Sigmoid colon (tissue), 7 donors: ENCODE measurements at regions of chr2 and their contacts with region 1.

Region 1: DNA sequence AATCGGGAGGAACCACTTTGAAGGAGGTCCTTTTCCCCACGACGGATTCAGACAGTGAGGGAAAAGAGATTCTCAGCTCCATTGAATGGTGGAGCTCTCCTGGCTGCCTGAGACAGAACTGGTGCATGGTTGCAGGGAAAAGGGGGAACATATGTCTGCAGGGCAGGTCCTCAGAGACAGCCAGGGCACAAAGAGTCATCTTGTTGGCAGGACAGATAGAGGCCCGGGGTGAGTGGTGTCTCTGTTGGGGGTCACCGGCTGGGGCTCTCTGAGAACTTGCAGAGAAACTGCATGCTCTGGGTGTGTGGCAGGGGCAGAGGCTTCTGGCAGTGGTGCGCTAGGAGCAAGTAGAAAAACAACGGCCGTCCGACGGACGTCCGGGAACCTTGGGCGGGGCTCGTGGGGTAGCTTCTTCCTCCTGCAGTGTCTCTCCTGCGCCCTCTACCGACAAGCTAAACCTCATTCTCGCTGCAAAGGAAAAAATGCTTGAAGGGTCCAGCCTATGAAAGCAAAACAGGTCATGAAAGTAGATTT is 94.3 kb downstream of the CDCA7 start:
- DNase-seq: peak; percentile 89
- H3K4me3 ChIP-seq: peak overlapping the region; percentile 1 to 41 (median 26)
- H3K27ac ChIP-seq: peak overlapping the region in 2 of 4 donors; percentile 43 to 63
- H3K4me1 ChIP-seq: peaks cover 0 to 4% (median 0%) of the 10 kb centered on the region in 4 donors
- H3K27me3 ChIP-seq: no peaks in the 10 kb centered on the region
- CTCF ChIP-seq: peak in 3 of 4 experiments; percentile 34 to 75 (median 52)
- EP300 ChIP-seq: no peak
- POLR2A ChIP-seq: no peak

Region 2: DNA sequence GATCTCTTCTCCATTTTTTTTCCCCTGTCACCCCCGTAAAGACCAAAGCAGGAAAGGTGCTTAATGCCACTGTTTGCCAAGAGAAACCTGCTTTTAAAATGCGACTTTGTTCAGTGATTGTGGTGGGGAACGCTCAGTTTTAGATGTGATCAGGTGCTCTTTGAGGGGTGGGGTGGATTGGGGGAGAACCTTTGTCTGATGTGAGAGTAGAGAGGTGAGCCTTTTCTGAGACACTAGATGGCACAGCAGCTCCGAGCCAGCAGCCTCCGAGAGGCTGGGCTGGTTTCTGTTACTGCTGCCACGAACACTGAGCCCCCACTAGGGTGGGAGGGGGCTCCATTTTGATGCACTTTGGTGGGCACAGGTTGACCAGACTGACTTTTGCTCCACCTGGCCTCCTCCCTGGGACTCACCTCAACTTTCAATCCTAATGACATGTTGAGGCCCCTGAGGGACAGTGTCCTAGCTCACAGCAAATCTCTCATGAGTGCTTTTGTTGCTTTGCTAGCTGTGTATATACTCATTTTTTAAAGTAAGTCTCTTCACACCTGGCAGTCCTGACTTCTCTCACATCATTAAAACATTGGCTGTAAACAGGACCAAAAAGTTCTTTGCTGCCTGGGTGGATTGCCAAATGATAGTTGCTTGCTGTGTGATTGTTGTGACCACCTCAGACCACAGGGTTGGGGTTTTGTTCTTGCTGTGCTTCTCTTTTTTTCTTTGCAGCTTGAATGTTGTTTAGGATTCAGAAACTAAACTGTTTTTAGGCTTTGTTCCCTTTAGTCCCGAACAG is 471.5 kb before region 1 on chr2:
- intact Hi-C with region 1: loop called (anchors 5 kb)
- DNase-seq: no peak
- H3K4me3 ChIP-seq: no peak overlapping the region
- H3K27ac ChIP-seq: no peak overlapping the region
- H3K4me1 ChIP-seq: peaks cover 0 to 5% (median 0%) of the 10 kb centered on the region in 4 donors
- H3K27me3 ChIP-seq: no peaks in the 10 kb centered on the region
- CTCF ChIP-seq: peak in 1 of 4 experiments; percentile 30
- EP300 ChIP-seq: no peak
- POLR2A ChIP-seq: no peak

Region 3: DNA sequence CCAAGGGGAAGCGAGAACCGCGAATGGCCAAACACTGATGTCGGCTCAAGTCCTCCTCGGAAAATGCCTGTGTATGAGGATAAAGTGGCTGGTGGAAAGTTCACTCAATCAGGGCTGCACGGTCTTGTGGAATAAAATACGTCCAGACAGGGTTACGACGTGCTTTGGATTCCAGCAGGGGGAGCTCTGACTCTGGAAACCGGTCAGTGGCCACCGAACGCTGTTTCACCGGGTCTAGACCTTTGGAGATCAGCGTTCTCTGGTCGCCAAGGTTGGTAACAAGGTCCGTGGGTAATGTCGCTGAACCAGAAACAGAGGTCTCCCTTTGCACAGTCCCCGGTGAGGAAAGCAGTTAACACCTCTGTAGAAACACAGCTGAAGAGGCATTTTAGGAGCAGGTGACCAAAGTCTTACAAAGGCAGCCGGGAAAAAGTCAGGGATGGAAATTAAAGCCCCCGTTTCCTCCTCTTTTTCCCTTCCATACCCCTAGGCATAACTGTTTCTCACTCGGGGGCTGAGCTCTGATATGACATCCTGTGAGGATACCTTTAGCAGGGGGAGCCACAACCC is 46.5 kb before region 1 on chr2:
- intact Hi-C with region 1: loop called (anchors 1 kb)
- DNase-seq: peak; percentile 89
- H3K4me3 ChIP-seq: peak overlapping the region in 2 of 4 donors; percentile 20 to 29
- H3K27ac ChIP-seq: no peak overlapping the region
- H3K4me1 ChIP-seq: peaks cover 0 to 15% (median 9%) of the 10 kb centered on the region in 4 donors
- H3K27me3 ChIP-seq: peaks cover 3 to 57% (median 16%) of the 10 kb centered on the region in 3 donors
- CTCF ChIP-seq: peak; percentile 77 to 84 (median 82)
- EP300 ChIP-seq: no peak
- POLR2A ChIP-seq: no peak

Region 4: DNA sequence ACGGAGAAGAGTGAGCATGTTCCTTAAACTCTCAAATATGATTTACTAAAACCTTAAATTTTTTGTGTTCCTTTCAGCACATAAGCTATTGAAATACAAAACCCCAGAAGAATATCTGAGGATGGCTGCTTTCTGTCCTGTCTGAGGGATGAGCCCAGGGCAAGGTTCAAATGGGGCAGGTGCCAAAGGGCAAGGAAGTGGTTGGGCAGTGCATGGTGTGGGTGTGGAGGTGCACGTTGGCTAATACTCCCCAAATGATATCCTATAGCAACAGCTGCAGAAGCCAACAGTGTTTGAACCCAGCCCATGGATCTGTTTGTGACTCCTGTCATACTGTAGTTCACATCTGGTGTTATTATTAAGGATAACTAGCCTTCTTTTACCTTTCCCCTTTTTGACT is 88.7 kb after region 1 on chr2:
- intact Hi-C with region 1: no loop called
- DNase-seq: no peak
- H3K4me3 ChIP-seq: no peak overlapping the region
- H3K27ac ChIP-seq: no peak overlapping the region
- H3K4me1 ChIP-seq: no peaks in the 10 kb centered on the region
- H3K27me3 ChIP-seq: no peaks in the 10 kb centered on the region
- CTCF ChIP-seq: no peak
- EP300 ChIP-seq: no peak
- POLR2A ChIP-seq: no peak